ENCODE measurements at regions of chr5 and their contacts with region 1.

Region 1: GRCh38 chr5:72822944-72823343 is 6.5 kb downstream of the TNPO1 start:
- DNase-seq: no peak
- ATAC-seq: no peak

Region 2: GRCh38 chr5:72857396-72857795 is 34.5 kb after region 1 on chr5:
- intact Hi-C with region 1: loop called (anchors 2 kb)
- DNase-seq: no peak
- ATAC-seq: no peak

Region 3: GRCh38 chr5:73027361-73027760 is 204.4 kb after region 1 on chr5:
- intact Hi-C with region 1: no loop called
- DNase-seq: no peak
- ATAC-seq: no peak